T-cell (primary cell): ENCODE measurements at regions of chr15 and their contacts with region 1.

Region 1: GRCh38 chr15:55277116-55277564 is 12.5 kb downstream of the RAB27A start:
- DNase-seq: peak in 30 of 35 experiments; percentile 17 to 69 (median 38)
- ATAC-seq: peak; percentile 53 to 64 (median 58)
- H3K4me3 ChIP-seq: peak overlapping the region in 1 of 2 donors; percentile 5
- H3K4me3 Mint-ChIP-seq: peak overlapping the region; percentile 58 to 69 (median 59)
- H3K27ac ChIP-seq: peak overlapping the region; percentile 76
- H3K27ac Mint-ChIP-seq: peak overlapping the region; percentile 95 to 99
- H3K4me1 ChIP-seq: peaks cover 13 to 58% of the 10 kb centered on the region in 2 experiments
- H3K4me1 Mint-ChIP-seq: peaks cover 78 to 86% (median 84%) of the 10 kb centered on the region in 3 donors
- H3K27me3 ChIP-seq: no peaks in the 10 kb centered on the region
- H3K27me3 Mint-ChIP-seq: no peaks in the 10 kb centered on the region

Region 2: DNA sequence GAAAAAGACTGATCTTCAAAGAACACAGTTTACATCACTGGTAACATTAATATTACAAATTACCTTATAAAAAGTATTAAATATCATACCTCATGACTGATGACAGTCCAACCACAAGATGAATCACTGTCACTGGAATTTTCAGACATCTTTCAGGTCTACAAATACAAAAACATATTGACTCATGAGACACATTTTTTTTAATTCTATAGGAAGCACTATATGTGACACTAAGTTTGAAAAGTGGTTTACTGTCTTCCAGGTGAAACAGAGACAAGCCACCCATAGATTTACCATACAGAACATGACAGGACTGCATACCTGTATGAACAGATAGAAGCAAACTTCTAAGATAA is 112.1 kb after region 1 on chr15:
- CTCF ChIA-PET with region 1: no interaction called
- POLR2A ChIA-PET with region 1: interaction called in 1 of 2 experiments, 14 read pairs
- DNase-seq: no peak
- ATAC-seq: no peak
- H3K4me3 ChIP-seq: no peak overlapping the region
- H3K4me3 Mint-ChIP-seq: no peak overlapping the region
- H3K27ac ChIP-seq: no peak overlapping the region
- H3K27ac Mint-ChIP-seq: no peak overlapping the region
- H3K4me1 ChIP-seq: no peaks in the 10 kb centered on the region
- H3K4me1 Mint-ChIP-seq: peaks cover 0 to 18% (median 9%) of the 10 kb centered on the region in 3 donors
- H3K27me3 ChIP-seq: no peaks in the 10 kb centered on the region
- H3K27me3 Mint-ChIP-seq: no peaks in the 10 kb centered on the region